ENCODE measurements at regions of chr14 and their contacts with region 1.

Region 1: DNA sequence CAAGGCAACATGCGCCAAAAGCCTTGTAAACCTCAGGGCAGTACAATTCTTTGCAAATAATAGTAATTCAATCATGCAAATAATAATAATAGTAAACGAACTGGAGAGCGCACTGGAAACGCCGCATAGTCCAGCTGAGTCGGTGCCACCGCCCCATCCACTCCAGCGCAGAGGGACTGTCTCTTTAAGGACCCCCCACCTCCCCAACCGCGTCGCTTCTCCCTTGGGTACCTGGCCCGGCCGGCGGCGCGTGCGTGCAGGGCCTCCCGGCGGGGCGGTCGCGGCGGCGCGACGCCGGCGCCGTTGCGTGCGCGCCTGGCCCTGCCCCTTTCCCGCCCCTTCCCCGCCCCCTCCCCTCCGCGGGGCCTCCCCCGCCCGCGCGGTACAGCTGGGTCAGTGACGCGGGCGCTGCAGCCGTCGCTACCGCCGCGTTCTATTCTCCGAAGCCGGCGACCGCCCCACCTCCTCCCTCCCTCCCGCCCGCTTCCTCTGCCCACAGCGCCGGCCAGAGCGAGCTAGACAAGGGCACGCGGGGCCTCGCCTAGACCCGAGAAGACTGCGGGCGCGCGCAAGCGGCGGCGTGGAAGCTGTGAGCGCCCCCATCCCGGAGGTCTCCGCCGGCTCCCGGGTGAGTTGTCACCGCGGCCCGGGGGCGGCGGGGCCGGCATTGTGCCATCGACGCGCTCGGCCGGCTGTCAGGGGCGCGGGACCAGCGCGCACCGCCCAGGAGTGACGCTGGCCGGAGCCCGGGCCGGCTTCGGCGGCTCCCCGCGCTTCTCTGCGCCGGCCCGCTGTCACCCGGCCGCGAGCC is at the start of gene SUSD6:
- DNase-seq: peak; percentile 93
- ATAC-seq: peak; percentile 65
- H3K4me3 ChIP-seq: peak within 1 kb of the TSS; percentile 67 to 92 (median 76)
- H3K4me3 Mint-ChIP-seq: peak within 1 kb of the TSS; percentile 98
- H3K27ac ChIP-seq: peak within 1 kb of the TSS; percentile 80 to 92
- H3K27ac Mint-ChIP-seq: peak within 1 kb of the TSS; percentile 98
- H3K4me1 ChIP-seq: peaks cover 51 to 55% of the 10 kb centered on the region in 2 donors
- H3K4me1 Mint-ChIP-seq: peaks cover 54% of the 10 kb centered on the region
- H3K27me3 ChIP-seq: no peaks in the 10 kb centered on the region
- H3K27me3 Mint-ChIP-seq: no peaks in the 10 kb centered on the region
- CTCF ChIP-seq: no peak
- total RNA-seq, gene SUSD6: 97.8 and 115 TPM in 2 replicates

Region 2: DNA sequence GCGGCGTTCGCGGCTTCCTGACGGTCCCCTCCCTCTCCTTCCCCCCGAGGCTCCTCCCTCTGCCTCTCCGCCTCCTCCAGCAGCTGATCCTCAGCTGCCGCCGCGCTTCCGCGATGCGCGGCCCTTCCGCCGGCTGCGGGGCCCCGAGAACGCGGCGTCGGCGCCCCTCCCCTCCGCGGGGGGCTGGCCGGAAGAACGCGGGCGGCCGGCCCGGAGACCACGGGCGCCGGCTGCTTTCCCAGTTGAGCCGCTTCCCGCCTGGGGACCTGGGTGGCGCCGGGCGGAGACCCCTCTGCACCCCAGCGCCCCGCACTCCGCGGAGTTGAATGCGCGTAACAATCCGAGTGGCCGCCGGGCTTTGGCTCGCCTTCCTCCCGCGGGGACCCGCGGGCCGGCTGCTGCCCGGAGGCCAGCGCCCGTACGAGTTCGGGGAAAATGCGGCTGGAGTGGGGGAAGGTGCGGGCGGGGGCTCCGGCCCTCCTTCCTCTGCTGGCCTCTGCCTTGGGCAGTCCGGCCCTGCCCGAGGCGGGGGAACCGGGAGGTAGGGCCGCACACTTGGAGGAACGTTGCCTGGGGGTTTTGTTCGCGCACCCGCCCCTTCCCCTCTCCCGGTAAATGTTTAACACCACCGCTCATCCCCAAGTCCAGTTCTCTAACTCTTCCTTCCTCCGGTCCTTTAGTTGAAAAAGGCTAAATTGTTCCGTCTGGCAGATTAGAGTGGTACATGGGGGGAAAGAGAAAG is 458.1 kb before region 1 on chr14:
- CTCF ChIA-PET with region 1: no interaction called
- POLR2A ChIA-PET with region 1: interaction called, 3 read pairs
- intact Hi-C with region 1: loop called (anchors 1 kb)
- DNase-seq: peak; percentile 95
- ATAC-seq: peak; percentile 92
- H3K4me3 ChIP-seq: peak overlapping the region; percentile 21 to 94 (median 92)
- H3K4me3 Mint-ChIP-seq: peak overlapping the region; percentile 89
- H3K27ac ChIP-seq: peak overlapping the region; percentile 56 to 72
- H3K27ac Mint-ChIP-seq: peak overlapping the region; percentile 95
- H3K4me1 ChIP-seq: peaks cover 9 to 21% of the 10 kb centered on the region in 2 donors
- H3K4me1 Mint-ChIP-seq: peaks cover 32% of the 10 kb centered on the region
- H3K27me3 ChIP-seq: no peaks in the 10 kb centered on the region
- H3K27me3 Mint-ChIP-seq: peaks cover 3% of the 10 kb centered on the region
- CTCF ChIP-seq: no peak

Region 3: GRCh38 chr14:69625299-69626131 is 14.1 kb after region 1 on chr14:
- CTCF ChIA-PET with region 1: interaction called, 10 read pairs
- POLR2A ChIA-PET with region 1: interaction called, 4 read pairs
- intact Hi-C with region 1: loop called (anchors 1 kb)
- DNase-seq: peak; percentile 64
- ATAC-seq: peak; percentile 90
- H3K4me3 ChIP-seq: peak overlapping the region in 4 of 5 experiments; percentile 2 to 26 (median 15)
- H3K4me3 Mint-ChIP-seq: peak overlapping the region; percentile 79
- H3K27ac ChIP-seq: peak overlapping the region; percentile 49 to 78
- H3K27ac Mint-ChIP-seq: peak overlapping the region; percentile 83
- H3K4me1 ChIP-seq: peaks cover 87 to 88% of the 10 kb centered on the region in 2 donors
- H3K4me1 Mint-ChIP-seq: peaks cover 88% of the 10 kb centered on the region
- H3K27me3 ChIP-seq: no peaks in the 10 kb centered on the region
- H3K27me3 Mint-ChIP-seq: no peaks in the 10 kb centered on the region
- CTCF ChIP-seq: no peak

Region 4: DNA sequence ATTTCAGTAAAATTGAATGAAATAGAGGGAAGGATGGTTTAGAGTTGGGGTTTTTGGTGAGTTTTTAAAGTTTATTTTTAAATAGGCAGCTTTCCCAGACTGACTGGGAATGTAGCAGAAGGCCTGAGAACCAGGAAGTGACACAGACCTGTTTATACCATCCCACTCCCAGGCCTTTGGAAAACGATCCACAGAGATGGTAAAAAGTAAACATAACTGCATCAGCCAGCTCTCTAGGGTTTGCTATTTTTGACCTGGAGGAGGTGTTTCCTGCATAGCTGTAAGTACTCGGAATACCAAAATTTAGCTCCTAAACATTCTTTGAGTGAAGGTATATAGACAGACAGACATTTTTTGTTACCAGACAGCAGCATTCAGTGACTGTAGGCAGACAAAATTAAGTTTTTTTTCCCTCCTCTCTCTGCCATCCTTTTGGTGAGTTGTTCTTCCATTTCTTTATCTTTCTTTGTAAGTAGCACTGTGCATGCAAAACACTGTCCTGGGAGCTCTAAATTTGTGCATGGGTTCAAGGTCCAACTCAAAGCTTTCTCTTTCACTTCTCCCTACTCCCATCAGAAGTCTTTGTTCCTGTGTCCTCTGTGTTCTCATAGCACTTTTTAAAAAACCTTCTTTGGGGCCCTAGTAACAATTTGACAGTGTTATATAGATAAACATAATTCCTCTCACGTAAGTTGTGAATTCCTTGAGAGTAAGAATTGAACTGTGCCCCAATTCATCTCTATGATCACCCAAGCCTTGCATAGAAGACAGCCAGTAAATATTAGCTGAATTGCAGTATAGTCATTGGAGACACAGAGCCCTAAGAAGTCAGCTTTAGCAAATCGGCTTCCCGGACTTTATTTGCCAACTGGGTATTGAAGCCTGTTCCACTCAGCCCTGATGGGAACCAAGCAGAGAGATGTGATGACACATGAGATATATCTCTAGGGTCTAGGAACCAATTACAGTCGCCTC is 37.4 kb after region 1 on chr14:
- CTCF ChIA-PET with region 1: interaction called, 9 read pairs
- POLR2A ChIA-PET with region 1: no interaction called
- intact Hi-C with region 1: loop called (anchors 5 kb)
- DNase-seq: no peak
- ATAC-seq: no peak
- H3K4me3 ChIP-seq: no peak overlapping the region
- H3K4me3 Mint-ChIP-seq: peak overlapping the region; percentile 10
- H3K27ac ChIP-seq: peak overlapping the region; percentile 5 to 93
- H3K27ac Mint-ChIP-seq: peak overlapping the region; percentile 86
- H3K4me1 ChIP-seq: peaks cover 86 to 87% of the 10 kb centered on the region in 2 donors
- H3K4me1 Mint-ChIP-seq: peaks cover 92% of the 10 kb centered on the region
- H3K27me3 ChIP-seq: no peaks in the 10 kb centered on the region
- H3K27me3 Mint-ChIP-seq: no peaks in the 10 kb centered on the region
- CTCF ChIP-seq: no peak

Region 5: GRCh38 chr14:69673578-69674305 is 62.3 kb after region 1 on chr14:
- CTCF ChIA-PET with region 1: interaction called, 3 read pairs
- POLR2A ChIA-PET with region 1: interaction called, 4 read pairs
- intact Hi-C with region 1: loop called (anchors 2 kb)
- DNase-seq: no peak
- ATAC-seq: peak; percentile 50
- H3K4me3 ChIP-seq: peak overlapping the region in 1 of 5 experiments; percentile 38
- H3K4me3 Mint-ChIP-seq: peak overlapping the region; percentile 73
- H3K27ac ChIP-seq: peak overlapping the region; percentile 27 to 77
- H3K27ac Mint-ChIP-seq: peak overlapping the region; percentile 91
- H3K4me1 ChIP-seq: peaks cover 75 to 80% of the 10 kb centered on the region in 2 donors
- H3K4me1 Mint-ChIP-seq: peaks cover 85% of the 10 kb centered on the region
- H3K27me3 ChIP-seq: no peaks in the 10 kb centered on the region
- H3K27me3 Mint-ChIP-seq: no peaks in the 10 kb centered on the region
- CTCF ChIP-seq: peak; percentile 27

Region 6: GRCh38 chr14:69708586-69709174 is 97.3 kb after region 1 on chr14:
- CTCF ChIA-PET with region 1: interaction called, 5 read pairs
- POLR2A ChIA-PET with region 1: interaction called, 3 read pairs
- intact Hi-C with region 1: loop called (anchors 5 kb)
- DNase-seq: no peak
- ATAC-seq: no peak
- H3K4me3 ChIP-seq: no peak overlapping the region
- H3K4me3 Mint-ChIP-seq: no peak overlapping the region
- H3K27ac ChIP-seq: no peak overlapping the region
- H3K27ac Mint-ChIP-seq: no peak overlapping the region
- H3K4me1 ChIP-seq: peaks cover 14 to 18% of the 10 kb centered on the region in 2 donors
- H3K4me1 Mint-ChIP-seq: peaks cover 39% of the 10 kb centered on the region
- H3K27me3 ChIP-seq: no peaks in the 10 kb centered on the region
- H3K27me3 Mint-ChIP-seq: no peaks in the 10 kb centered on the region
- CTCF ChIP-seq: peak; percentile 25

Region 7: DNA sequence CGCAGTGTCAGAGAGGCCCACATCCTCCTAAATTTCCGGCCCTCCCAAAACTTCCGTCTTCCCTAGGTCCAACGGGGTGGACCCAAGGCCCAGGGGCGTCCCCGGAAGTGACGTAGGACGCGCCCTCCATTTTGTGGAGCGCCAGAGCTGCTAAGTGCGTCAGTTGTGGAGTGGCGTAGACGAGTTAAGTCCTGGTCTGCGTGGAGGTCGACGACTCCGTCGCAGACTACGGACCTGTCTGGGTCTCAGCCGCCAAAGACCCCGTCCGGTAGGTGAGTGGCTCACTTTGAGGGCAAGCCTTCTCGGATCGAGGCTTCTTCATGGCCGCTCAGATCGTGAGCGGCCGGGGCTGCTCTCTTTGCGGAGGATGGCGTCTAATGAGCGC is 155.6 kb after region 1 on chr14 and contains the start of gene SRSF5:
- CTCF ChIA-PET with region 1: interaction called, 3 read pairs
- POLR2A ChIA-PET with region 1: interaction called, 20 read pairs
- intact Hi-C with region 1: loop called (anchors 1 kb)
- DNase-seq: peak; percentile 98
- ATAC-seq: peak; percentile 80
- H3K4me3 ChIP-seq: peak within 1 kb of the TSS; percentile 97 to 100 (median 99)
- H3K4me3 Mint-ChIP-seq: peak within 1 kb of the TSS; percentile 98
- H3K27ac ChIP-seq: peak within 1 kb of the TSS; percentile 99 to 100
- H3K27ac Mint-ChIP-seq: peak within 1 kb of the TSS; percentile 100
- H3K4me1 ChIP-seq: peaks cover 26 to 27% of the 10 kb centered on the region in 2 donors
- H3K4me1 Mint-ChIP-seq: peaks cover 43% of the 10 kb centered on the region
- H3K27me3 ChIP-seq: no peaks in the 10 kb centered on the region
- H3K27me3 Mint-ChIP-seq: no peaks in the 10 kb centered on the region
- CTCF ChIP-seq: no peak
- total RNA-seq, gene SRSF5: 708 and 768 TPM in 2 replicates